ENCODE measurements at regions of chr19 and their contacts with region 1.

Region 1: GRCh38 chr19:41821003-41821735 is 23.3 kb downstream of the LYPD4 start:
- DNase-seq: peak; percentile 67 to 84 (median 76)
- H3K4me3 ChIP-seq: no peak overlapping the region
- H3K27ac ChIP-seq: no peak overlapping the region
- H3K4me1 ChIP-seq: peaks cover 0 to 2% (median 0%) of the 10 kb centered on the region in 4 experiments
- H3K27me3 ChIP-seq: no peaks in the 10 kb centered on the region

Region 2: DNA sequence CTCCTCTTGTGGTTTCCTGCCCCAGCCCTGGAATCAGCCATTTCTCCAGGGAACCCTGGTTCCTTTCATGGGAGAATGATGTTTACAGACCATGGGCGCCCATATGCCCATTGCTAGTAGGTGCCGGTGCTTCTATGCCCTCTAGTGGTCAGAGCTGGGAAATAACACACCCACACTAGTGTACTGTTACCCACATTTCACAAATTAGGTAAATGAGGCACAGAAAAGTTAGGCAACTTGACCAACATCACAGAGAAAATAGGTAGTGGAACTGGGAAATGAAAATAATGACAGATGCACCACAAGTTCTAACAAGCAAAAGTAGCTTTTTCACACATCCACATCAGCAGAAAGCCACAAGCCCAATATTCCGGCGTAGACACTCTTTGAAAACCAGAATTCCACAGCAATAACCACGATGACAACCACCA is 26.1 kb before region 1 on chr19:
- CTCF ChIA-PET with region 1: interaction called, 250 read pairs
- POLR2A ChIA-PET with region 1: interaction called, 5 read pairs
- DNase-seq: peak; percentile 45 to 71 (median 62)
- H3K4me3 ChIP-seq: no peak overlapping the region
- H3K27ac ChIP-seq: no peak overlapping the region
- H3K4me1 ChIP-seq: peaks cover 0 to 8% (median under 1%) of the 10 kb centered on the region in 4 experiments
- H3K27me3 ChIP-seq: no peaks in the 10 kb centered on the region

Region 3: DNA sequence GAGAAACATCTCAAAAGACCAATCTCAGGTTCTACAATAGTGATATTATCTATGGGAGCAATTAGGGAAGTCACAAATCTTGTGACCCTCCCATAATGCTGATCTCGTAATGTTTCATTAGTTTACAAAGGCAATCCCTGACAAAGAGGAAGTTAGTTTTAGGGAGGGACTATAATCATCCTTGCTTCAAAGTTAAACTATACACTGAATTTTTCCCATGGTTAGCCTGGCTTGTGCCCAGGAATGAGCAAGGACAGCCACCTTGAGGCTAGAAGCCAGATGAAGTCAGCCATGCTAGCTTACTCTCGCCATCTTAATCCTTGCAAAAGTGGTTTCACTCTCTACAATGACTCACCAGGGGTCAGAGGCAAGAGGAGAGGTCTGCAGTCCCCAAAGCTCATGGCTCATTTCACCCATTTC is 19.4 kb before region 1 on chr19:
- CTCF ChIA-PET with region 1: interaction called, 29 read pairs
- POLR2A ChIA-PET with region 1: no interaction called
- DNase-seq: peak in 2 of 3 donors; percentile 82 to 87
- H3K4me3 ChIP-seq: no peak overlapping the region
- H3K27ac ChIP-seq: no peak overlapping the region
- H3K4me1 ChIP-seq: peaks cover 21 to 37% (median 29%) of the 10 kb centered on the region in 4 experiments
- H3K27me3 ChIP-seq: no peaks in the 10 kb centered on the region

Region 4: DNA sequence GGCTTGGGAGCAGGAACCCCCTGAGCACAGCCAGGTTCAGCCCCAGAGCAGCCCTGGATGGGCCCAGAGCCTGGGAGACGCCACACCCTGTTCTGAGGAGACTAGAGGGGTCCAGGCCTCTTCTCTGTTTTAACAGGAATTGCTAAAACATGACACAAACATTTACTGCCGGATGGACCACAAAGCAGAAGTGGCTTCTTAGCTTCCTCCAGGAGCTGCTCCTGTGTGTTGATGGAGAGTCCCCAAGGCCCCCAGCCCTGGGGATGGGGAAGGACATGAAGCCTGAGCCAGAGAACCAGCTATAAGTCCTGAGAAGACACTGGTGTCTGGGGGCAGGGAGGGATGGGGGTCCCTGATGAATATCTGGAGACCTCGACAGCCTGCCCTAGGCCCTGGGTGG is 10.1 kb before region 1 on chr19:
- CTCF ChIA-PET with region 1: interaction called, 17 read pairs
- POLR2A ChIA-PET with region 1: interaction called, 5 read pairs
- DNase-seq: peak; percentile 65 to 94 (median 92)
- H3K4me3 ChIP-seq: peak overlapping the region in 3 of 7 experiments; percentile 33 to 42 (median 41)
- H3K27ac ChIP-seq: peak overlapping the region in 1 of 2 experiments; percentile 6
- H3K4me1 ChIP-seq: peaks cover 14 to 55% (median 46%) of the 10 kb centered on the region in 4 experiments
- H3K27me3 ChIP-seq: no peaks in the 10 kb centered on the region